Activated CD4-positive, alpha-beta T cell treated with anti-CD3 and anti-CD28 coated beads for 36 hours (primary cell): ENCODE measurements at regions of chr2 and their contacts with region 1.

Region 1: GRCh38 chr2:239267288-239267951 is 133.4 kb downstream of the HDAC4 start:
- DNase-seq: peak; percentile 95
- ATAC-seq: peak; percentile 75
- H3K4me3 Mint-ChIP-seq: peak overlapping the region; percentile 80
- H3K27ac Mint-ChIP-seq: peak overlapping the region; percentile 96
- H3K4me1 Mint-ChIP-seq: peaks cover 77% of the 10 kb centered on the region
- H3K27me3 Mint-ChIP-seq: peaks cover 18% of the 10 kb centered on the region

Region 2: DNA sequence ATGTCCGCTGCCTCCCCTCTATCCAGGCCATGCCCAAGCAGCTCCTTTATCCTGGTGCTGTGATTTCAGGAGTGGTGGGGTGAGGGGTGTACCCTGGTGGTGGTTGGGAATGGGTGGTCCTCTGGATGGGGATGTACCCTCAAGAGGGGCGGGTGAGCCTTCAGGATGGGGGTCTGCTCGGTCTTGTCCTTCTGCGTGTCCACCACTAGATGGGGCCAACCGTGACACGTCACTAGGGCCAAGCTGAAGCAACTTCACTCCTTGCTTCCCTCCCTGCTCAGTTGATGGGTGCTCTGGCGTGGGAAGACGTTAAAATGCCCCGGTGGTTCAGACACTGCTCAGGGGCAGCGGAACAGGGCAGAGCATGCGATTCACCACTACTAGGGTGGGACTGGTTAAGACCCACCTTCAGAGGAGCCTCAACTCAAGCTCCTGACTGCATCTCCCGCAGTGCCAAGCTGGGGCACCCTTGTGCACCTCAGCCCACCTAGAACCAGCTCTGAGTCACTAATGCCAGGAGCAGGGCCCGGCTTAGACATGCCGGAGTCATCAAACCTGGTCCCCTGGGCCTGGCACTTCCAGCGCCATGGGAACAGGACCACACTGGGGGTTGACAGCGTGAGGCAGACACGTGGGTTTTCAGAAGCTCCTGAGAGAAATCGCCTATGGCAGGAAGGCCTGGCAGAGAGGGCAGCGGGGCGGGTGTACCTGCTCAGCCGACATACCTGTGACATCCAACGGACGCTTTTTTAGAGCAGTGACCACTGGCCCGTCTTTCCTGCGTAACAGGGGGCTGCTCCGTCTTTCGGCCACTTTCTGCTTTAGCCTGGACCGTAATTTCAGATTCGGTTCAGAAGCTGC is 123.3 kb before region 1 on chr2:
- CTCF ChIA-PET with region 1: no interaction called
- POLR2A ChIA-PET with region 1: no interaction called
- intact Hi-C with region 1: loop called (anchors 2 to 5 kb)
- DNase-seq: peak; percentile 53
- ATAC-seq: peak; percentile 65
- H3K4me3 Mint-ChIP-seq: no peak overlapping the region
- H3K27ac Mint-ChIP-seq: no peak overlapping the region
- H3K4me1 Mint-ChIP-seq: peaks cover 3% of the 10 kb centered on the region
- H3K27me3 Mint-ChIP-seq: no peaks in the 10 kb centered on the region

Region 3: DNA sequence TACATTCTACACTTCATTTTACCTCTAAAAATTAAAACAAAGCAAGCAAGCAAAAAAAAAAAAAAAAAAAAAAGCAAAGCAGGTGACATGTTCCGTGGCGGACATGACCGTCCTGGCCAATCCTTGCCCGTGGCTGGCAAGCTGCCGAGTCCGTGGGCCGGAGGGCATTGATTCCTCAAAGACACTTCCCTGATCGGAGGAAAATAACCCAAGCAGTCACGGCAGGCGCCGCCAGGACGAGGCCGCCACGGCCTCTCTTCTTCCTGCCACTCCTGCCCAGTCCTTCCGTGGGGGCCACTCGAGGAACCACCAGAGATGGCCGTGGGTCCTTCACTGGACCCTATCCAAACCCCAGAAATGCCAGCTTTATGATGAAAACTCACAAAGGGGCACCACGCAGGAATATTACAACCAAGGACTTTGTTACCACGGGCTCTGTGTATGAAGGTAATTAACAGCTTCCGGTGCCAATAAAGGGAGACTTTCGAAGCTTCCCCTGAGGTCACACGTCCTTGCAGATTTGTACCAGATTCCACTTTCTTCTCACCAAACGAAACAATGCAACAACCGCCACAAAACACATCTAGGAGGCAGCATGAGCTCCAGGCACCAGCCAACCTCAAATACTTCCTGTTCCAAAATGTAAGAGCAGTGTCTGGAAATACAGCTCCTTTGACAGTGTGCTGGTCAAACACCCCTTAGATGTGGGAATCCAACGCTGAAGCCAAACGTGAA is 36.9 kb before region 1 on chr2:
- CTCF ChIA-PET with region 1: no interaction called
- POLR2A ChIA-PET with region 1: no interaction called
- intact Hi-C with region 1: loop called in 1 of 2 experiments (anchors 5 kb)
- DNase-seq: no peak
- ATAC-seq: peak; percentile 25
- H3K4me3 Mint-ChIP-seq: no peak overlapping the region
- H3K27ac Mint-ChIP-seq: peak overlapping the region; percentile 87
- H3K4me1 Mint-ChIP-seq: peaks cover 71% of the 10 kb centered on the region
- H3K27me3 Mint-ChIP-seq: no peaks in the 10 kb centered on the region

Region 4: GRCh38 chr2:239298116-239298804 is 30.8 kb after region 1 on chr2:
- CTCF ChIA-PET with region 1: interaction called, 5 read pairs
- POLR2A ChIA-PET with region 1: no interaction called
- intact Hi-C with region 1: loop called in 1 of 2 experiments (anchors 1 kb)
- DNase-seq: peak; percentile 86
- ATAC-seq: peak; percentile 91
- H3K4me3 Mint-ChIP-seq: peak overlapping the region; percentile 63
- H3K27ac Mint-ChIP-seq: peak overlapping the region; percentile 75
- H3K4me1 Mint-ChIP-seq: peaks cover 71% of the 10 kb centered on the region
- H3K27me3 Mint-ChIP-seq: peaks cover 8% of the 10 kb centered on the region

Region 5: DNA sequence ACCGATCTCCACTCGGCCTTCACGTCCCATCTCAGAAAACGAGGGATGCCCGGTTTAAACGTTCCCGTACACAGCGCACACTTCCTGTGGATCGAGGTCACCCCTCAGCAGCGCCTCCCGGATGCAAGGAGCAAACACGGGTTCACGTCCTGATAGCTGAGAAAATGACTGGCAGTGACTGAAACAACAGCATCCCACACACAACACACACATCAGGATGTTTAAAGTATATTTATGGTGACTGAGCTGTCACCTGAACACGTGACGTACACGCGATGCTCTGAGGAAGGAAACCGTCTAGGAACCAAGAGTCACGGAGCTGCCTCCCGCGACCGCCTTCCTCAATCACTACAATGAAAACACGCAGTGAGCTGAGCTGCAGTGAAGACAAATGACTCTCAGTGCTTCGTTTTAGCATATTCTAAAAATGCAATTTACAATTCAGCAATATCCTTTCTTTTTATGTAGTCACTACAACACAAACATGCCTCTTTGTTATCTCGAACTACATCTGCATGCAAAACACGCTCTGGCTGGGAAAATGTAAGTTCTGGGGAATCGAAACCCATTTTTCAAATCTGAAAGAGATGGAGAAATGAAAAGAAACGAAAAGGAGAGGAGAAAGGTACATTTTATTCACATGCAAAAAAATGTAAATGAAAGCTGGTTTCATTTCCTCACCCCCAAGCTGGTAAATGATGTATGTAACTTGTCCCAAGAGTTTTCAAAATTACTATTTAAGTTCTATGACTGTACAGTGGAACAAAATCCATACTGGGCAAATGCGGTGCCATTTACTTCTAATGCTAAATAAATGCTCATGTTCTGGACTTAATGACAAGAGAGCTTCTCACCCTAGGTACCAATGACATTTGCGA is 113.7 kb after region 1 on chr2:
- CTCF ChIA-PET with region 1: interaction called, 5 read pairs
- POLR2A ChIA-PET with region 1: interaction called, 5 read pairs
- intact Hi-C with region 1: loop called in 1 of 2 experiments (anchors 1 kb)
- DNase-seq: peak; percentile 86
- ATAC-seq: peak; percentile 84
- H3K4me3 Mint-ChIP-seq: peak overlapping the region; percentile 62
- H3K27ac Mint-ChIP-seq: peak overlapping the region; percentile 94
- H3K4me1 Mint-ChIP-seq: peaks cover 40% of the 10 kb centered on the region
- H3K27me3 Mint-ChIP-seq: no peaks in the 10 kb centered on the region

Region 6: DNA sequence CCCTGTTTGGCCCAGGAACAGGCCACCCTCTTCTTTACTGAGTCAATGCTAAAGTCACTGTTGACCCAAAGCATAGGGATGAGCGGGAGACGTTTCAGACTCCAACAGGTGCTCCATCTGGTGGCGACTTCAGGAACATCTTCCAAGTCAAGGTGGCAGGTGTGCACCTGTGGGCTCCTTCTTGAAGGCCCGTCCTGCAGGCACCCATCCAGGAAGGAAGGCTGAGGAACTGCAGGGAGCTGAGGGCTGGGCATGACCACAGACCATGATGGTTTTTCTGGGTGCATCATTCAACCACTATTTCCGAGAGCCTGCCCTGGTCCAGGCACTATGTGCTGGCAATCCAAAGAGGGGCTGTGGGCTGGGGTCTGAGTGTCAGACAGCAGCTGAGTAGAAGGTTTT is 614.9 kb after region 1 on chr2:
- CTCF ChIA-PET with region 1: no interaction called
- POLR2A ChIA-PET with region 1: no interaction called
- intact Hi-C with region 1: loop called in 1 of 2 experiments (anchors 2 kb)
- DNase-seq: peak; percentile 77
- ATAC-seq: peak; percentile 75
- H3K4me3 Mint-ChIP-seq: no peak overlapping the region
- H3K27ac Mint-ChIP-seq: no peak overlapping the region
- H3K4me1 Mint-ChIP-seq: peaks cover 4% of the 10 kb centered on the region
- H3K27me3 Mint-ChIP-seq: no peaks in the 10 kb centered on the region